ENCODE measurements at regions of chr5 and their contacts with region 1.

Region 1: GRCh38 chr5:68438876-68439275 is 223.3 kb downstream of the PIK3R1 start:
- DNase-seq: no peak
- H3K4me3 Mint-ChIP-seq: no peak overlapping the region
- H3K27ac Mint-ChIP-seq: no peak overlapping the region
- H3K4me1 Mint-ChIP-seq: peaks cover 39% of the 10 kb centered on the region
- H3K27me3 Mint-ChIP-seq: peaks cover 11% of the 10 kb centered on the region

Region 2: GRCh38 chr5:68449380-68449779 is 10.5 kb after region 1 on chr5:
- CTCF ChIA-PET with region 1: interaction called, 11 read pairs
- POLR2A ChIA-PET with region 1: no interaction called
- DNase-seq: no peak
- H3K4me3 Mint-ChIP-seq: no peak overlapping the region
- H3K27ac Mint-ChIP-seq: no peak overlapping the region
- H3K4me1 Mint-ChIP-seq: peaks cover 3% of the 10 kb centered on the region
- H3K27me3 Mint-ChIP-seq: peaks cover 10% of the 10 kb centered on the region